PC-9 (cell line): ENCODE measurements at regions of chr2 and their contacts with region 1.

Region 1: GRCh38 chr2:120287183-120288015 is 34.7 kb downstream of the RALB start:
- DNase-seq: peak; percentile 39 to 90
- H3K4me3 ChIP-seq: peak overlapping the region; percentile 1; the same call in 1 of the 2 replicates
- H3K27ac ChIP-seq: peak overlapping the region; percentile 66
- H3K4me1 ChIP-seq: peaks cover 54% of the 10 kb centered on the region
- H3K27me3 ChIP-seq: no peaks in the 10 kb centered on the region
- CTCF ChIP-seq: no peak

Region 2: GRCh38 chr2:119897736-119898395 is 389.5 kb before region 1 on chr2:
- CTCF ChIA-PET with region 1: no interaction called
- POLR2A ChIA-PET with region 1: no interaction called
- intact Hi-C with region 1: no loop called
- DNase-seq: no peak
- H3K4me3 ChIP-seq: no peak overlapping the region
- H3K27ac ChIP-seq: no peak overlapping the region
- H3K4me1 ChIP-seq: no peaks in the 10 kb centered on the region
- H3K27me3 ChIP-seq: no peaks in the 10 kb centered on the region
- CTCF ChIP-seq: no peak

Region 3: GRCh38 chr2:120267348-120267747 is 20.1 kb before region 1 on chr2:
- CTCF ChIA-PET with region 1: interaction called, 12 read pairs
- POLR2A ChIA-PET with region 1: interaction called, 7 read pairs
- intact Hi-C with region 1: no loop called
- DNase-seq: no peak
- H3K4me3 ChIP-seq: no peak overlapping the region
- H3K27ac ChIP-seq: no peak overlapping the region
- H3K4me1 ChIP-seq: no peaks in the 10 kb centered on the region
- H3K27me3 ChIP-seq: no peaks in the 10 kb centered on the region
- CTCF ChIP-seq: no peak